ENCODE measurements at regions of chr17 and their contacts with region 1.

Region 1: DNA sequence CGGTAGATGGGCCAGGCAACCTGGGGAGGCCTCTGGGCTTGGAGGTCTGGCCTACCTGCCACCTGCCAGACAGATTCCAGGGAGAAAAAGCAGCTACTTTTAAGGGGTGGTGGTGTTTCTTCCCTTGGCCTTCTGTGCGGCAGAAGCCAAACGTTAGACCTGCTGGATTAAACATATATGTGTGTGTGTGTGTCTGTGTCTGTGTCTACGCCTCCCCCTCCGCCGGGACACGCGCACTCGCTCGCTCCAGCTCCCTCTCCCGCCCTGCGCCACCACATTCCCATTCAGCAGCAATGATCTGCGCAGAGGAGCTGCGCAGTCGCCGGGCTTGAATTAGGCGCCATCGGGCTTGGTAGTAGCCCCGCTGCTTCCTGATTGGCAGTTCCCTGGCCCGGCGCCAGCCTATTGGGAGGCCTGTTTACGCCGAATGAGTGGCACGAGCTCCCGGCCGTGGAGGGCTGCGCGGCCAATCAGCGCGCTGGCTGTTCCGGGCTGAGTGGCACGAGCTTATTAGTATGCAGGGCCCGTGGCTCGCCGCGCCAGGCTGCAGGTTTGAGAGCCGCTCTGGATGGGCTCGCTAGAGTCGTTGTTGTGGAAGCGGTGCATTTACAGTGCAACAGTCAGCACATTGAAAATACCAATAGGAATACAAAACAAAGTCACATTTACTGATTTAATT is at the start of gene BAHCC1:
- DNase-seq: peak; percentile 100
- ATAC-seq: peak; percentile 73 to 83 (median 73)
- H3K4me3 ChIP-seq: peak within 1 kb of the TSS; percentile 29 to 94 (median 78)
- H3K27ac ChIP-seq: peak within 1 kb of the TSS; percentile 87 to 95 (median 94)
- H3K4me1 ChIP-seq: peaks cover 17 to 28% (median 24%) of the 10 kb centered on the region in 3 donors
- H3K27me3 ChIP-seq: no peaks in the 10 kb centered on the region
- CTCF ChIP-seq: no peak
- total RNA-seq, gene BAHCC1: 8.0 to 11.5 (median 9.6) TPM

Region 2: GRCh38 chr17:80981062-80981902 is 413.8 kb before region 1 on chr17:
- intact Hi-C with region 1: no loop called
- DNase-seq: peak in 2 of 6 donors; percentile 42 to 77
- ATAC-seq: peak in 3 of 4 donors; percentile 35 to 63 (median 60)
- H3K4me3 ChIP-seq: no peak overlapping the region
- H3K27ac ChIP-seq: no peak overlapping the region
- H3K4me1 ChIP-seq: peaks cover 0 to 7% (median 0%) of the 10 kb centered on the region in 3 donors
- H3K27me3 ChIP-seq: no peaks in the 10 kb centered on the region
- CTCF ChIP-seq: peak; percentile 52 to 74 (median 61)

Region 3: GRCh38 chr17:81034779-81035388 is 360.2 kb before region 1 on chr17 and contains the start of gene BAIAP2:
- intact Hi-C with region 1: no loop called
- DNase-seq: peak; percentile 94 to 100 (median 98)
- ATAC-seq: peak; percentile 71 to 83 (median 78)
- H3K4me3 ChIP-seq: peak within 1 kb of the TSS; percentile 35 to 60 (median 46)
- H3K27ac ChIP-seq: no peak within 1 kb of the TSS
- H3K4me1 ChIP-seq: peaks cover 11 to 27% (median 23%) of the 10 kb centered on the region in 3 donors
- H3K27me3 ChIP-seq: no peaks in the 10 kb centered on the region
- CTCF ChIP-seq: no peak
- total RNA-seq, gene BAIAP2: 4.7 to 13.2 (median 8.6) TPM

Region 4: GRCh38 chr17:81217491-81217890 is 177.6 kb before region 1 on chr17:
- intact Hi-C with region 1: no loop called
- DNase-seq: peak in 1 of 6 donors; percentile 43
- ATAC-seq: no peak
- H3K4me3 ChIP-seq: no peak overlapping the region
- H3K27ac ChIP-seq: no peak overlapping the region
- H3K4me1 ChIP-seq: peaks cover 0 to 7% (median 7%) of the 10 kb centered on the region in 3 donors
- H3K27me3 ChIP-seq: no peaks in the 10 kb centered on the region
- CTCF ChIP-seq: no peak

Region 5: GRCh38 chr17:81294856-81295680 is 100.0 kb before region 1 on chr17 and contains the start of gene SLC38A10:
- intact Hi-C with region 1: loop called in 1 of 3 experiments (anchors 10 kb)
- DNase-seq: peak; percentile 92 to 97 (median 94)
- ATAC-seq: peak; percentile 86 to 92 (median 88)
- H3K4me3 ChIP-seq: peak within 1 kb of the TSS; percentile 73 to 93 (median 88)
- H3K27ac ChIP-seq: peak within 1 kb of the TSS; percentile 86 to 98 (median 93)
- H3K4me1 ChIP-seq: peaks cover 0 to 15% (median 0%) of the 10 kb centered on the region in 3 donors
- H3K27me3 ChIP-seq: no peaks in the 10 kb centered on the region
- CTCF ChIP-seq: no peak
- total RNA-seq, gene SLC38A10: 72.8 to 119 (median 95.7) TPM

Region 6: DNA sequence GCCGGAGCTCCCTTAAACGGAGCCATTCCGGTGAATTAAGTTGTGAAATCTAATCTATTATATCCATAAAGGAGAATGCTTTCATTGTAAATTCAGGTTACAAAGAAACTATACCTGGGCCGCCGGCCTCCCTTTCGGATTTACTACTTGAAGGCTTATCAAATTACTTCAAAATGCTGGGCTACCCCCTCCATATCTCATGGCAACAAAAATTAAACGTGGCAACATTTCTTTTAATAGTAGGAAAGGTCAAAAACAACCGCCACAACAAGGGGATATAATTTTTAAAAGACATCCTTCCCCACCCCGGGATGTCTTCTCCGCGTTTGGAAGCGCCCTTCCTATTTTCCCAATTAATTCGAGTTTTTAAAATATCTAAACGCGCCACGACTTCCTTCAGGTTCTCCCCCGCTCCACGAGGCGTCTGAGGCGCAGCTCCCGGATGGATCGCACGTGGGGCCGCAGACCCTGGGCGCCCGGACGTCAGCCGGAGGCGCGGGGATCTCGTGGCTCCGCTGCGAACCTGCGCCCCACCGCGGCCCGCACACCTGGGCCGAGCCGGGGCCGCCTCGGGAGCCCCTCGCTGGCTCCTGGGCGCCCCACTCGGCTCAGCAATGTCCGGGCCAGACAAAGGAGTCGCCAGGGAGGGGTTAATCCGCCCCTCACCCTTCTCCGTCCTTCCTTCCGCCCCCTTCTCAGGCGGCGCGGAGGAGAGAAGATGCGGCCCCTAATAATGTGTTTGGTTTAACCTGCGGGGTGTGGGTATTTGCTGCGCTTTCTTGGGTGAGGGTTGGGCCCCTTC is 52.6 kb before region 1 on chr17:
- intact Hi-C with region 1: loop called in 1 of 3 experiments (anchors 1 kb)
- DNase-seq: peak in 4 of 6 donors; percentile 39 to 69 (median 48)
- ATAC-seq: no peak
- H3K4me3 ChIP-seq: peak overlapping the region; percentile 76 to 86 (median 81)
- H3K27ac ChIP-seq: peak overlapping the region; percentile 96 to 98 (median 97)
- H3K4me1 ChIP-seq: peaks cover 13 to 40% (median 24%) of the 10 kb centered on the region in 3 donors
- H3K27me3 ChIP-seq: no peaks in the 10 kb centered on the region
- CTCF ChIP-seq: no peak

Region 7: DNA sequence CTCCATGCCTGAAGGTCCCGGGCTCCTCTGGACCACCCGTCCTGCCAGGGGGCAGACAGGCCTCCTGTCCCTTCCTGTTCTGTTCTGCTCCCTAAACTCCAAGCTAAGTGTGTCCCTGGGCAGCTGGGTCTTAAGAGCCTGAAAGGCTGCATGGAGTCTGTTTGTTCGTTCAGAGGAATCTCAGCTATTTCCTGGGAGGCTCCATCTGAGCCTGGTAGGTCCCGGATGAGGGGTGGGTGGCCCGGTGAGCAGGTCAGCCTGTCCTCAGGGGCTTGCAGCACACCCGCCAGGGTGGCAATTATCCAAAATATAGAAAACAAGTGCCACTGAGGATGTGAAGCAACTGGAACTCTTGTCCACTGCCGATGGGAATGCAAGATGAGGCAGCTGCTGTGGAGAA is 105.0 kb after region 1 on chr17:
- intact Hi-C with region 1: no loop called
- DNase-seq: no peak
- ATAC-seq: no peak
- H3K4me3 ChIP-seq: no peak overlapping the region
- H3K27ac ChIP-seq: no peak overlapping the region
- H3K4me1 ChIP-seq: no peaks in the 10 kb centered on the region
- H3K27me3 ChIP-seq: no peaks in the 10 kb centered on the region
- CTCF ChIP-seq: no peak

Region 8: DNA sequence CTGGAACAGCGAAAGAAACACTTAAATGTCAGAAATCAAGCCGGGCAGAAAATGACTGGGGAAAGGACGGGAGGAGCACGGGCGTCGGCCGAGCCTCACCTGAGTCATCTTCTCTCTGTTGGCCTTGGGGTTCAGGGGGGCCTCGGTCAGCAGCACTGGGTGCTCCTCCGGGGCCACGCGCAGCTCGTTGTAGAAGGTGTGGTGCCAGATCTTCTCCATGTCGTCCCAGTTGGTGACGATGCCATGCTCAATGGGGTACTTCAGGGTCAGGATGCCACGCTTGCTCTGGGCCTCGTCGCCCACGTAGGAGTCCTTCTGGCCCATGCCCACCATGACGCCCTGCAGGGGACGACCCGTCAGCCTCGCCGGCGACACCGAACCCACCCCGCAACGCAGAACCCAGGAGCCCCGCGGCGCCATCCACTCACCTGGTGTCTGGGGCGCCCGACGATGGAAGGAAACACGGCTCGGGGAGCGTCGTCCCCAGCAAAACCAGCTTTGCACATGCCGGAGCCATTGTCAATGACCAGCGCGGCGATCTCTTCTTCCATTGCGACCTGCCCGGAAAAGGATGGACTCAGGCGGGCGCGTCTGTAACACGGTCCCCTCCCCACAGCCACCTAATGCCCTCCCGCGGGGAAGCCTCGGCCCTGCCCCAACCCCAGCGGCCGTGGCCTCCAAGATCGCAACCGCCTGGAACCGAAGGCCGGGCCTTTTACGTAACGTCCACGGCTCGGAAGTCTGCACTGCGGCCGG is 116.9 kb after region 1 on chr17:
- intact Hi-C with region 1: loop called in 1 of 3 experiments (anchors 2 kb)
- DNase-seq: peak in 4 of 6 donors; percentile 57 to 87 (median 62)
- ATAC-seq: peak; percentile 1 to 10 (median 4)
- H3K4me3 ChIP-seq: peak overlapping the region; percentile 77 to 97 (median 88)
- H3K27ac ChIP-seq: peak overlapping the region; percentile 84 to 100 (median 98)
- H3K4me1 ChIP-seq: peaks cover 6 to 19% (median 9%) of the 10 kb centered on the region in 3 donors
- H3K27me3 ChIP-seq: no peaks in the 10 kb centered on the region
- CTCF ChIP-seq: no peak